ENCODE measurements at regions of chrX and their contacts with region 1.

Region 1: DNA sequence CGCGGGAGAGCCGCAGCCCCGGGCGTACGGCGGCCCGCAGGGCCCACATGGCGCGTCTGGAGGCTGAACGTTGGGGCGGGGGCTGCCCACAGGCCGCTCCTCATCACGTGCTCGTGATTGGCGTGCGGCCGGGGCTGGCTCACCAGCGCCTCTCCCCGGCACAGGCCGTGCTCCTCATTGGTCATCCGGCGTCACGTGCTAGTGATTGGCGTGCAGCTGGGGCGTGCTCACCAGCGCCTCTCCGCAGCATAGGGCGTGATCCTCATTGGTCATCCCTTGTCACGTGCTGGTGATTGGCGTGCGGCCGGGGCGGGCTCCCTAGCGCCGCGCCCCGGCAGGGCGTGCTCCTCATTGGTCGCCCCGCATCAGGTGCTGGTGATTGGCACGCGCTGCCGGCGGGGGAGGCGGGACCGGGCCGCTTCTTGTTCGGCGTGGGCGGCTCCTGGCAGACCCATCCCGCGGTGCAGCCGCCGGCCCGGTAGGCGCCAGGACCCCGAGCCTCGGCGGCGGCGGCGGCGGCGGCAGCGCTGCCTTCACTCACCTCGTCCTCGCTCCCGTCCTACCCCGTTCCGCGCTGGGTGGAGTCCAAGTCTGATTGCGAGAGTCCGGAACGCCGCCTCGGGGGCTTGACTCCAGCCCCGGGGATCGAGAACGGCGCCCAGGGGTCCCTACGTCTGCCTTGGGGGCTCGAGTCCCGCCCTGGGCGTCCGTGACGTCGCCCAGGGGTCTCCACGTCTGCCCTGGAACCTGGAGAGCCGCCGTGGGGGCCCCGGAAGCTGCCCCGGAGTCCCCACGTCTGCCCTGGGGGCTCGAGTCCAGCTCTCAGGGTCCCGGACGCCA is at the start of gene GTPBP6:
- DNase-seq: peak; percentile 100
- H3K4me3 Mint-ChIP-seq: peak within 1 kb of the TSS; percentile 86
- H3K27ac Mint-ChIP-seq: peak within 1 kb of the TSS; percentile 94
- H3K4me1 Mint-ChIP-seq: peaks cover 18% of the 10 kb centered on the region
- H3K27me3 Mint-ChIP-seq: peaks cover 2% of the 10 kb centered on the region
- total RNA-seq, gene GTPBP6: 68.3 and 69.5 TPM in 2 replicates

Region 2: GRCh38 chrX:283115-283845 is 35.7 kb before region 1 on chrX:
- intact Hi-C with region 1: loop called (anchors 1 kb)
- DNase-seq: peak; percentile 87
- H3K4me3 Mint-ChIP-seq: peak overlapping the region; percentile 96
- H3K27ac Mint-ChIP-seq: peak overlapping the region; percentile 96
- H3K4me1 Mint-ChIP-seq: peaks cover 5% of the 10 kb centered on the region
- H3K27me3 Mint-ChIP-seq: peaks cover 6% of the 10 kb centered on the region

Measured in activated T-helper 1 cell treated with anti-CD3 and anti-CD28 coated beads, Interleukin-12 subunit alpha, Interleukin-12 subunit beta, Interleukin-2, Interleukin-4 antibody, amounts not matched to agents 30 ng/mL and 10 ng/mL and 1 ng/mL, durations not matched to agents 14 hours and 24 hours and 36 hours (primary cell).